CD4-positive, alpha-beta T cell (primary cell): ENCODE measurements at regions of chr19 and their contacts with region 1.

Region 1: DNA sequence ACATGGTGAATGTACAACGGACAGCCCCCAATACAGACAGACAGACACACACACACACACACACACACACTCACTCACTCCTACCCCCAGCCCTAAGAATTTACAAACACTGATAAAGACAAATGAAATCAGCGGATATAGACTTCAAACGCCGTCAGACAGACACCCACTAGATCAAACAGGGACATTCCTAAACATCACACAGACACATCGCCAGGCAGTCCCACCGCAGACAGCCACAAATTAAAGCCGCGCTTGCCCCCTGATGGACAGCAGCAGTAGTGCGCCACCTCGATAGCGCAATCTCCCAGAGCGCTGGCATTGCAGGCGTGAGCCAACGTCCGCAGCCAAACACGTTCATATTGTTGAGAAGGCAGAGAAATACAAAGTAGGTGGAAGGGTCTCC is 24.7 kb upstream of the ADGRE1 start:
- DNase-seq: peak; percentile 84 to 96 (median 88)
- ATAC-seq: peak; percentile 88
- H3K4me3 ChIP-seq: peak overlapping the region; percentile 53
- H3K4me3 Mint-ChIP-seq: peak overlapping the region; percentile 59
- H3K27ac ChIP-seq: no peak overlapping the region
- H3K27ac Mint-ChIP-seq: peak overlapping the region; percentile 71
- H3K4me1 ChIP-seq: peaks cover 18% of the 10 kb centered on the region
- H3K4me1 Mint-ChIP-seq: peaks cover 29% of the 10 kb centered on the region
- H3K27me3 ChIP-seq: no peaks in the 10 kb centered on the region
- H3K27me3 Mint-ChIP-seq: no peaks in the 10 kb centered on the region
- CTCF ChIP-seq: peak; percentile 80

Region 2: DNA sequence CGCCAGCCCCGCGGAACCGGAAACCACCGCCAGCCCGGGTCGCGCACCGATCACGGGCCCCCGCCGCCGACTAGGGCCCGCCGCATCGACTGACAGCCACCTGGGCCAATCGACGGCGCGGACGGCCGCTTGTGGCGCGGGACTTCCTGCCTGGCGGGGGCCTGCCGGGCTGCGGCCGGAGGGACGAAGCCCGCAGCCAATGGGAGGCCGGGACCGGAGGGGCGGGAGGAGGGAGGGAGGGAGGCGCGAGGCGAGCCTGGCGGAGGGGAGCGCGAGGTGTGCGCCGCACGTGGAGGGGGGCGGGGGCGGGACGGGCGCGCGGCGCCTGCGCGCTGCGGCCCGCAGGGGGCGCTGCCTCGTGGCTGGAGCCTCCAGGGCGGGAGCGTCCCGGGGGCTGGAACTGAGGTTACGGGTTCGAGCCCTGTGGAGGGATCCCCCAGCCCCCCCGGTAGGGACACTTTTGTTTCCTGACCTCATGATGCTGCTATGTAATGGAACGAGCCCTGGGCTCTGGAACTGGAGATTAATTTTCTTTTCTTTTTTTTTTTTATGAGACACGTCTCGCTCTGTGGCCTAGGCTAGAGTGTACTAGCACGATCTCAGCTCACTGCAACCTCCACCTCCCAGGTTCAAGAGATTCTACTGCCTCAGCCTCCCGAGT is 582.6 kb before region 1 on chr19 and contains the start of gene MLLT1:
- CTCF ChIA-PET with region 1: no interaction called
- POLR2A ChIA-PET with region 1: no interaction called
- intact Hi-C with region 1: loop called in 1 of 2 experiments (anchors 2 kb)
- DNase-seq: peak; percentile 85 to 98 (median 94)
- ATAC-seq: peak; percentile 79
- H3K4me3 ChIP-seq: peak within 1 kb of the TSS; percentile 67
- H3K4me3 Mint-ChIP-seq: peak within 1 kb of the TSS; percentile 94
- H3K27ac ChIP-seq: peak within 1 kb of the TSS; percentile 54 to 75
- H3K27ac Mint-ChIP-seq: peak within 1 kb of the TSS; percentile 86
- H3K4me1 ChIP-seq: peaks cover 42% of the 10 kb centered on the region
- H3K4me1 Mint-ChIP-seq: peaks cover 40% of the 10 kb centered on the region
- H3K27me3 ChIP-seq: no peaks in the 10 kb centered on the region
- H3K27me3 Mint-ChIP-seq: no peaks in the 10 kb centered on the region
- CTCF ChIP-seq: peak; percentile 56
- total RNA-seq, gene MLLT1: 18.3 to 22.1 TPM

Region 3: DNA sequence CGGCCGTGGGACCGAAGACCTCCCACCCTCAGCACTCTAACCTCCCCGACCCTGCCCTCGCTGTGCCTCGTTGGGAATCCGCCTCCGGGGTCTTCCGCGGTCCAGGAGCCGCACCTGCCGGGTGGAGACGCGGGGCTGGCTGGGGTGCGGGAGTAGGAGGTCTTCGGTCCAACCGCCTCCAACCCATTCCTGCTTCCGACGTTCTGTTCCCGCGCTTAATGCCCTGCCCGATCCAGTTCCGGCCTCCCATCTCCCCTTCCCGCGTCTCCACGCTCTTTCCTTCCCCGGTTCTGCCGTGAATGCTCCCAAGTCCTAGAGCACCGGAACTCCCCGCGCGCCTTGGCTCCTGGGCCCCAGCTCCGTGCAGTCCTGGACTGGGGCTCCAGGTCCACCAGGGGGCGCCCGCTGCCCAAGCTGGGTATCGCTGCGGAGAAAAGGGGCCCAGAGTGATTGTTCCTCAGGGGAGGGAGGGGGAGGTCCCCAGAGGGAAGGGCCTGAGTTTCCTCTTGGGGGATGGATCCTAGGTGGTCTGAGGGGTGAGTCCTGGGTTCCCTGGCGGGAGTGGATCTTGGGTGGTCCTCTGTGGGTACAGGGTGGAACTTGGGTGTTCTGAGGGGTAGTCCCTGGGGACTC is 345.9 kb before region 1 on chr19:
- CTCF ChIA-PET with region 1: interaction called, 22 read pairs
- POLR2A ChIA-PET with region 1: interaction called, 8 read pairs
- intact Hi-C with region 1: loop called (anchors 1 kb)
- DNase-seq: peak; percentile 81 to 95 (median 90)
- ATAC-seq: peak; percentile 91
- H3K4me3 ChIP-seq: peak overlapping the region; percentile 86
- H3K4me3 Mint-ChIP-seq: peak overlapping the region; percentile 94
- H3K27ac ChIP-seq: no peak overlapping the region
- H3K27ac Mint-ChIP-seq: peak overlapping the region; percentile 24
- H3K4me1 ChIP-seq: peaks cover 32% of the 10 kb centered on the region
- H3K4me1 Mint-ChIP-seq: peaks cover 33% of the 10 kb centered on the region
- H3K27me3 ChIP-seq: no peaks in the 10 kb centered on the region
- H3K27me3 Mint-ChIP-seq: no peaks in the 10 kb centered on the region
- CTCF ChIP-seq: peak; percentile 95

Region 4: DNA sequence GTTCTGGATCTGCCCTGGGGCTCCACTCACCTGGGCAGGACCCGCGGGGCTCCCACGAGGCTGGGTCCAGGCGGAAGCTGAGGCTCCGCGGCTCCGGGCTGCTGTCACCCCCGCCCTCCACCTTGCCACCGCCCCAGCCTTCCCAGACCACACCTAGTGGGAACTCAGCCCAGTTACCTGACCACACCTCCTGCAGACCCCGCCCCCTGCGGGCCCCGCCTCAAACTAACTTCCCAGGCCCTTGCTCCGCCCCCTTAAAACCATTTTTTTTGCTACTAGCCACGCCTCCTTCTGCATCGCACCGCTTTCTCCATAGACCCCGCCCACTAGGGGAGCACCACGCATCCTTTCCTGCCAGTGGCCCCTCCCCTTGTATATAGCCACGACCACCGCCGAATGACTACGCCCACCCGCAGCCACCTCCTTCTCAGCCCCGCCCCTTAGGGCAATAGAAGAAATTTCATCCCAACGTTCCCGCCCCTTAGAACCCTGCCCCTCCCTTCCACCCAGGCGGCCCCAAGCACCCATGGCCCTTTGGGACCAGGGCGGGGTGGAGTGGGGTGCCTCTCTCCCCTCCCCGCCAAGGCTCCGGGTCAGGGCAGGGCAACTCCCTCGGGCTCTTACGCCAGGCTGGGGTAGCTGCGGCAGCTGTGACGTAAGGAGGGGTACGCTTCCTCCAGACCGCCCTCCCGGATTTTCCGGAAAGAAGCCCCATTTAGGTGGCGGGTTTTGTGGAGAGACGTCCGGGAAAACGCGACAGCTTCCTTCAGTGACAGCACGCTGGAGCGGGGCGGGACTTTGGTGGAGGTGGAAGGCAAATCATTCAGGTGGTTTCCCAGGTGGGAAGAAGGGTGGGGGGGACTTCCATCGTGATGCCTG is 95.1 kb before region 1 on chr19 and contains the start of gene SH2D3A:
- CTCF ChIA-PET with region 1: interaction called, 17 read pairs
- POLR2A ChIA-PET with region 1: interaction called, 5 read pairs
- intact Hi-C with region 1: loop called in 1 of 2 experiments (anchors 1 kb)
- DNase-seq: peak; percentile 90 to 99 (median 95)
- ATAC-seq: peak; percentile 71
- H3K4me3 ChIP-seq: peak within 1 kb of the TSS; percentile 92
- H3K4me3 Mint-ChIP-seq: peak within 1 kb of the TSS; percentile 92
- H3K27ac ChIP-seq: peak within 1 kb of the TSS; percentile 93
- H3K27ac Mint-ChIP-seq: peak within 1 kb of the TSS; percentile 96
- H3K4me1 ChIP-seq: peaks cover 65% of the 10 kb centered on the region
- H3K4me1 Mint-ChIP-seq: peaks cover 47% of the 10 kb centered on the region
- H3K27me3 ChIP-seq: no peaks in the 10 kb centered on the region
- H3K27me3 Mint-ChIP-seq: no peaks in the 10 kb centered on the region
- CTCF ChIP-seq: no peak
- total RNA-seq, gene SH2D3A: 39.2 to 41.3 TPM

Region 5: GRCh38 chr19:6891761-6892385 is 29.2 kb after region 1 on chr19:
- CTCF ChIA-PET with region 1: interaction called, 13 read pairs
- POLR2A ChIA-PET with region 1: interaction called, 38 read pairs
- intact Hi-C with region 1: loop called in 1 of 2 experiments (anchors 1 kb)
- DNase-seq: peak in 4 of 14 experiments; percentile 14 to 70 (median 56)
- ATAC-seq: peak; percentile 59
- H3K4me3 ChIP-seq: no peak overlapping the region
- H3K4me3 Mint-ChIP-seq: peak overlapping the region; percentile 32
- H3K27ac ChIP-seq: peak overlapping the region; percentile 39 to 64
- H3K27ac Mint-ChIP-seq: peak overlapping the region; percentile 84
- H3K4me1 ChIP-seq: peaks cover 67% of the 10 kb centered on the region
- H3K4me1 Mint-ChIP-seq: peaks cover 93% of the 10 kb centered on the region
- H3K27me3 ChIP-seq: no peaks in the 10 kb centered on the region
- H3K27me3 Mint-ChIP-seq: no peaks in the 10 kb centered on the region
- CTCF ChIP-seq: no peak